Heart right ventricle (tissue), 16 donors: ENCODE measurements at regions of chr18 and their contacts with region 1.

Region 1: DNA sequence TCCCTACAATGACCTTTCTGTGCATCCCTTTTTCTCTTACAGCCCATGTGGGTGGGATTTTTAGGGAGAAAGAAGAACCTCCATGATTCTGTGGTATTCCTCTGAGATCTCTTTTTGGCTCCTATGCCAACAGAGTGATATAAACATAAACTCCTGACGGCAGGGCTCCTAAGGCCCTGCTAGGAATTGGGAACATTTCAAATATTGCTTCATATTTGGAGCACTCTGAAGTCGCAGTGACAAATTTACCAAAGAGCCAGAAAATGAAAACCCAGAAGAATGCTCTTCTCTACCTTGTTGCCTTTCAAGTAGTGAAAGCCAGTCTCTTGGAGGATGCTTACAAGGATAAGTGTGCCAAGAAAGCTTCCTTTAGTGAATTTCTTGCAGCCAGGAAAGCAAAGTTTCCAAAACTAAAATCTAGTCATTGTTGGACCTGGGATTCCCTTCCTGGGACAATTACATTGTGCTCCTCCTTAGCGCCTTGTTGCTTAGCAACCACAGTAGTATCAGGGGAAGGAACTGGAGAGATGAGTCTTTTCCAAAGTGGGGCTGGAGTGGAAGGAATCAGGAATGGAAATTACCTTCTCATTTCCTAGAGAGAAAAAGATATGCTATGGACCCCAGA is 7.3 kb upstream of the SETBP1 start:
- DNase-seq: no peak
- ATAC-seq: peak in 1 of 8 donors; percentile 32
- H3K4me3 ChIP-seq: no peak overlapping the region
- H3K27ac ChIP-seq: no peak overlapping the region
- H3K4me1 ChIP-seq: peaks cover 0 to 10% (median 2%) of the 10 kb centered on the region in 9 donors
- H3K27me3 ChIP-seq: peaks cover 0 to 15% (median 0%) of the 10 kb centered on the region in 7 donors
- CTCF ChIP-seq: no peak

Region 2: GRCh38 chr18:43627848-43628526 is 1045.4 kb before region 1 on chr18:
- intact Hi-C with region 1: loop called in 1 of 10 experiments (anchors 5 kb)
- DNase-seq: no peak
- ATAC-seq: no peak
- H3K4me3 ChIP-seq: no peak overlapping the region
- H3K27ac ChIP-seq: no peak overlapping the region
- H3K4me1 ChIP-seq: peaks cover 0 to 3% (median 0%) of the 10 kb centered on the region in 9 donors
- H3K27me3 ChIP-seq: peaks cover 0 to 5% (median 0%) of the 10 kb centered on the region in 7 donors
- CTCF ChIP-seq: no peak

Region 3: DNA sequence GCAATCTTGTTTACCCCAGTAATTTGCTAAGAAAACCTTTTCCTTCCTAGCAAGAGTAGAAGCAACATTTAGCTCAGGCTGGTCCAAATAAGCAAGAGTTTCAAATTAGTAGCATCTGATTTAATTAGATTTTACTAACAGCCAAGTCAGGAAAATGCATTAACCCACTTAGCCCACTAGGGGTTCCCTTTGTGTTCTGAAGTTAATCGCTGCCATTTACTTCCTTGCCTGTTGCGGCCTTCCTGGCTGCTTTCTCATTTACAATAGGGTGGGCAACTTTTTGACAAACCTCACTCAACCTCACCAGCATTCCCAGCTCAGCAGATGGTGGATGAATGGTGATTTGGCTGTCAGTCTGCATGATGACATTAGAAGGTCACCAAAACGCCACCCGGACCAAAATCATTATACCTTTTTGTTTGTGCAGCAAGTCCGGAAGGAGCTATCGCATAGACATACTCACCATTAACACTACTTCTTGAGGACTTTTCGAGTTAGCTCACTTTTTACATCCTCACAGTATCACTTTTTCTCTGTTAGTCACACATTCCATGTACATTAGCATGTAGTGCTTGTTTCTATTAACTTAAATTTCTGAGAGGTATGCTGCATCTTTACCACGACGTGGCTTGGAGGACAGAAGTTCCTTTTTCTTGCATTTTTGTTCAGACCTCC is 94.2 kb before region 1 on chr18:
- intact Hi-C with region 1: loop called in 1 of 10 experiments (anchors 5 kb)
- DNase-seq: no peak
- ATAC-seq: no peak
- H3K4me3 ChIP-seq: no peak overlapping the region
- H3K27ac ChIP-seq: no peak overlapping the region
- H3K4me1 ChIP-seq: no peaks in the 10 kb centered on the region
- H3K27me3 ChIP-seq: no peaks in the 10 kb centered on the region
- CTCF ChIP-seq: peak; percentile 33 to 64 (median 52)

Region 4: GRCh38 chr18:44594799-44595467 is 78.4 kb before region 1 on chr18:
- intact Hi-C with region 1: loop called in 2 of 10 experiments (anchors 5 kb)
- DNase-seq: peak in 1 of 2 donors; percentile 13
- ATAC-seq: peak in 6 of 8 donors; percentile 52 to 88 (median 72)
- H3K4me3 ChIP-seq: no peak overlapping the region
- H3K27ac ChIP-seq: peak overlapping the region in 6 of 10 donors; percentile 3 to 41 (median 32)
- H3K4me1 ChIP-seq: peaks cover 7 to 50% (median 18%) of the 10 kb centered on the region in 9 donors
- H3K27me3 ChIP-seq: no peaks in the 10 kb centered on the region
- CTCF ChIP-seq: no peak

Region 5: GRCh38 chr18:44826418-44827259 is 153.3 kb after region 1 on chr18:
- intact Hi-C with region 1: no loop called
- DNase-seq: peak in 1 of 2 donors; percentile 88
- ATAC-seq: peak; percentile 62 to 83 (median 74)
- H3K4me3 ChIP-seq: no peak overlapping the region
- H3K27ac ChIP-seq: peak overlapping the region; percentile 1 to 79 (median 60)
- H3K4me1 ChIP-seq: peaks cover 7 to 68% (median 27%) of the 10 kb centered on the region in 9 donors
- H3K27me3 ChIP-seq: no peaks in the 10 kb centered on the region
- CTCF ChIP-seq: no peak